A673 (cell line): ENCODE measurements at regions of chr7 and their contacts with region 1.

Region 1: GRCh38 chr7:17530741-17531417 is 232.4 kb downstream of the AHR start:
- DNase-seq: peak; percentile 54
- H3K4me3 ChIP-seq: no peak overlapping the region
- H3K27ac ChIP-seq: no peak overlapping the region
- H3K4me1 ChIP-seq: peaks cover 7% of the 10 kb centered on the region
- H3K27me3 ChIP-seq: no peaks in the 10 kb centered on the region
- CTCF ChIP-seq: peak; percentile 60

Region 2: DNA sequence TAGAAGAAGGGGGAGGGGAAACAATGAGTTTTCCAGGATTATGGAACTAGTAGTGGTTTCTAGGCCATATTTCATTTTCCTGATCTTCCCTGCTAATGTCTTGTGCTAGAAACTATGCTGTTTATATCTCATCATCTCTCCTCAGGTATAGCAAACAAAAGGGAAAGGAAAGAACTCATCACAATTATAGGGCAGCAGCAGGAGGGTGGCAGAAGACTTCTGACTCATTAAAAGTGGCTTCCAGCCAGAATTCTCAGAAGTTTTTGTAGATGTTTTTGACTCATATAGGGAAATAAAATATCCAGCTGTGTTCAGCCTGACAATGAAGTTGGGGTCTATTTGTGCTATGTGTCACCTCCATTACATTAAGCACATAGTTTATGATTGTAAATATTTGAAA is 226.0 kb before region 1 on chr7:
- CTCF ChIA-PET with region 1: no interaction called
- POLR2A ChIA-PET with region 1: no interaction called
- intact Hi-C with region 1: loop called (anchors 2 kb)
- DNase-seq: peak; percentile 88
- H3K4me3 ChIP-seq: no peak overlapping the region
- H3K27ac ChIP-seq: no peak overlapping the region
- H3K4me1 ChIP-seq: peaks cover 34% of the 10 kb centered on the region
- H3K27me3 ChIP-seq: no peaks in the 10 kb centered on the region
- CTCF ChIP-seq: no peak

Region 3: GRCh38 chr7:17646253-17646956 is 115.5 kb after region 1 on chr7:
- CTCF ChIA-PET with region 1: no interaction called
- POLR2A ChIA-PET with region 1: no interaction called
- intact Hi-C with region 1: loop called (anchors 5 kb)
- DNase-seq: peak; percentile 34
- H3K4me3 ChIP-seq: no peak overlapping the region
- H3K27ac ChIP-seq: no peak overlapping the region
- H3K4me1 ChIP-seq: no peaks in the 10 kb centered on the region
- H3K27me3 ChIP-seq: no peaks in the 10 kb centered on the region
- CTCF ChIP-seq: peak; percentile 54; the same call in 1 of the 2 replicates

Region 4: GRCh38 chr7:17706734-17707133 is 175.9 kb after region 1 on chr7:
- CTCF ChIA-PET with region 1: no interaction called
- POLR2A ChIA-PET with region 1: no interaction called
- intact Hi-C with region 1: no loop called
- DNase-seq: peak; percentile 78
- H3K4me3 ChIP-seq: no peak overlapping the region
- H3K27ac ChIP-seq: no peak overlapping the region
- H3K4me1 ChIP-seq: no peaks in the 10 kb centered on the region
- H3K27me3 ChIP-seq: peaks cover 12% of the 10 kb centered on the region
- CTCF ChIP-seq: peak; percentile 77